AG04449 (cell line): ENCODE measurements at regions of chr5 and their contacts with region 1.

Region 1: DNA sequence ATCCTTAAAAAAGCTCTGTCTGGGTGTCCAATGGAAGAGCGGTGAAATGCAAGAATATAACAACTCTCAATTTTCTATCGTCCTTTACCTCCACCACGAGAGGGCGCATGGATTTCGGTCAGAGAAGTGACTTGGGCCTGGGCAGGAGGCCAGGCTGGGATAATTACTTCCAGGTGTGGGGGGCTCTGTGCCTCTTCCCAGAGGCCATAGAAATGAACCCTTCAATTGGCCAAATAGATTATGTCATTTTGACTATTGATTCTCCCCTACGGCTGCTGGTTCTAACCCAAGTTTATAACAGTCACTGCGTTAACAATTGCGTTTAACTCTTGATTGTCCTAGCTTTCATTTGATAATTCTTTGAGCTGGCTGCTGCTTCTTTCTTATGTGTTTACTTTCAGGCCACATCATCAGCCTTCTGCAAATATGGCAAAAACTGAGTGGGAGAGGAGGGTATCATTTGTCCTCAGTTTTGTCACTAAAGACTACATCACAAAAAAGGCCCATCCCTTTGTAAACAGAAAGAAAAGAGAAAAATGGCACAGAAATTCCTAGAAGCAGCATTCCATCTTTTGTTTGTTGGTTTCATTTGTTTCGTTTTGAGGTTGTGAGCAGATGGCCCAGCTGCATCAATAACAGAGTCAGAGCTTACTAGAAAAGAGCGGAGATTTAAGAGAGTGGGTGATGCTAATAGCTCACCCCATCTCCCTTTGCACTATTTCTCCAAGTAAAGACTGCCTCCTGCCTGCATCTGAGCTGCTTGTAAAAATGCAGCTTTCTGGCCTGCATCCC is 45.4 kb upstream of the ZFR start:
- DNase-seq: no peak
- H3K4me3 ChIP-seq: no peak overlapping the region; the same call in 1 of the 2 replicates
- CTCF ChIP-seq: peak; percentile 65

Region 2: DNA sequence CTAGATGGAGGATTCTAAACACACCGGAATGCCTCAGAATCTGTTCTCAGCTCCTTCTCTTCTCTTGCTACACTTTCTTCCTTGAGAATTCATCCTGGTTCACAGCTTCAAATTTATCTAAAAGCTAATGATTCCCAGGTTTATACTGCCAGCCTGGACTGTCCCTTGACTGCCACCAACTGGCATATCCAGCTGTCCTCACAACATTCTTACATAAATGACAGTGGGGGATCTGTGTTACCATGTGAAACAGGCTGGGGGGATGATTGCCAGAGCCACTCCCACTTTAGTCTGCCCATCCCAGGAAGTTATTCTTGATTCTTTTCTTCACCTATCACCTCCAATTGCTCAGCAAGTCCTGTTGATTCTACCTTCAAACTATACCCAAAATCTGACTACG is 18.2 kb before region 1 on chr5:
- CTCF ChIA-PET with region 1: interaction called, 53 read pairs
- POLR2A ChIA-PET with region 1: no interaction called
- DNase-seq: no peak
- H3K4me3 ChIP-seq: no peak overlapping the region
- CTCF ChIP-seq: no peak

Region 3: GRCh38 chr5:32504989-32505596 is 15.1 kb after region 1 on chr5:
- CTCF ChIA-PET with region 1: interaction called, 134 read pairs
- POLR2A ChIA-PET with region 1: interaction called, 3 read pairs
- DNase-seq: peak; percentile 92
- H3K4me3 ChIP-seq: peak overlapping the region; percentile 46
- CTCF ChIP-seq: no peak

Region 4: DNA sequence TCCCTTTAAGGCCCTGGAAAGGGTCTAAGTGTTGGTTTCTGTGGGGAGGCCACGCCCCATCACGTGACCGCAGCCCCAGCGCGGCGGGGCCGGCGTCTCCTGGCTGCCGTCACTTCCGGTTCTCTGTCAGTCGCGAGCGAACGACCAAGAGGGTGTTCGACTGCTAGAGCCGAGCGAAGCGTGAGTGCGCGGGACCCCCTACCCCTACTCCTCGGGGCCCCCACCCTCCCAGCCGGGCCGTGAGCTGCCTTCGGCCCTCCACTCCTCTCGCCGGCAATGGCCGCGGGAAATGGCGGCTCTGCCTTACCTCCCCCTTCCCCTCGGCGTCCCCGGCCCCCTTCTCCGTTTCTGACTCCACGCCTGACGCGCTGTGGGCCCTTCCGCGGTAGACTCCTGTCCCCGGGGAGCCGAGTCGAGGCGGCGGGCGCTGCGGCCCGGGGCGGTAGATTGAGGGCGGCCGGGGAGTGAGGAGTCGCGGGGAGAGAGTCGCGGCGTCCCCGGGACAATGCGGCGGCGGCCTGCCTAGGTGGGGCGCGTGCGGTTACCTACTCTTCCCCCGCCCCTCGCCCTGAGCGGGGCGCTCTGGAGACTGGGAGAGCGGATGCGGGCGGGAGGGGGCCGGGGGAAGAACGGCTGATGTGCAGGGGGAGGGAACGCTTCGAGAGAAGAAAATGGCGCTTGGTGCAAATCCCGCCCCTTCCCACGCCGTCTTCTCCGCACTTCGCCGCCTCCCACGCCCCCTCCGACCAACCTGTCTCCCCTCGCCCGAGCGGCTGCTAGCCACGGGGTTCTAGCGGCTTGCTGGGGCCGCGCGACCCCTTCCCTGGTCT is 95.7 kb after region 1 on chr5 and contains the start of gene SUB1:
- CTCF ChIA-PET with region 1: interaction called, 449 read pairs
- POLR2A ChIA-PET with region 1: interaction called, 4 read pairs
- DNase-seq: peak; percentile 24
- H3K4me3 ChIP-seq: peak within 1 kb of the TSS; percentile 90
- CTCF ChIP-seq: peak; percentile 3

Region 5: GRCh38 chr5:32613050-32613672 is 123.2 kb after region 1 on chr5:
- CTCF ChIA-PET with region 1: interaction called, 47 read pairs
- POLR2A ChIA-PET with region 1: no interaction called
- DNase-seq: no peak
- H3K4me3 ChIP-seq: no peak overlapping the region
- CTCF ChIP-seq: peak; percentile 84